Cardiac septum (tissue), 1 donor: ENCODE measurements at regions of chr4 and their contacts with region 1.

Region 1: DNA sequence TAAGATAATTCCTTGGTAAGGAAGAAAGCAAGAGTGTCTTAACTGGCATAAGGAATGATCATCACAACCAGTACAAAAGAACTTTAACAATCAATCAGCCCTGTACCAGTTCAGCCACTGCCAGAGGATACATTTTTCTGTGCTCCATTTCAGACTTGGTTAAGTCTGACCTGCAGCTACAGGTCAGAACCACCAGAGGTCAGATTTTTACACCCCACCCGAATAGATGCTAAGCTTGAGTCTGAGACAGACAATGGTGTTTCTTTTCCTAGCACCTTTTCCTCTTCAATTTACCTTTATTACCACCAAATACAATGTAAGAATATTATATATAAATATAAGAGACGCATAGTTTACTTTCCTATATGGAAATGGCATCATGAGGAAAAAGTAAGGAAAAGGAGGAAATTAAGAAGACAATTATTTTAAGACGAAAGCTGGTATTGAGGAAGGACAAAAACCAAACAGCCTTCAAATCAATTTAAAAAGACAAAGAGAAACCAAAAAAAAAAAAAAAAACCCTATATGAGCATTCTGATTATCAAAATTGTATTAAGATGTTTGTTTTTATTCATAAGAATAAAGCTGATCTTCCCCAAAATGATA is 215.3 kb upstream of the TTC29 start:
- DNase-seq: no peak

Region 2: DNA sequence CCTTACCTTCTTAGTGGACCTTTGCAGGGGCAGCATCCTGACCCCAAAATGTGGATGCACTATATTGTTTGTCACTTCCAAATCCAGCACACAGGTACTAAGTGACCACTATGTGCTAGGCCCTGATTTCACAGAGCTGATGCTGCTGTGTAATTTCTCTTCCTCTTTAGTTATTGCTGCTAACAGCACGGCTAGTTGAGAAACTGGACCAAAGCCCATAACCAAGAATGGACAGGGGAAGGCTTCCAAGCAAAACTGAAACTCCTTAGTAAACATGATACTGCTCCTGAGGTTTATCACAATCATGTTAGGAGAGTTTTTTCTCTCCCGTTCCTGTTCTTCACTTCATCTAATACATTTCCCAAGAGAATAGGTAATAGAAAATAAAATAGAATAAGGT is 42.5 kb before region 1 on chr4:
- intact Hi-C with region 1: loop called (anchors 5 kb)
- DNase-seq: no peak

Region 3: GRCh38 chr4:147198411-147199051 is 37.5 kb after region 1 on chr4:
- intact Hi-C with region 1: no loop called
- DNase-seq: no peak

Region 4: GRCh38 chr4:147518846-147519767 is 358.1 kb after region 1 on chr4:
- intact Hi-C with region 1: loop called (anchors 5 kb)
- DNase-seq: no peak

Region 5: GRCh38 chr4:147590249-147590920 is 429.4 kb after region 1 on chr4:
- intact Hi-C with region 1: loop called (anchors 2 kb)
- DNase-seq: no peak